Activated naive CD4-positive, alpha-beta T cell treated with anti-CD3 and anti-CD28 coated beads for 36 hours (primary cell): ENCODE measurements at regions of chr2 and their contacts with region 1.

Region 1: DNA sequence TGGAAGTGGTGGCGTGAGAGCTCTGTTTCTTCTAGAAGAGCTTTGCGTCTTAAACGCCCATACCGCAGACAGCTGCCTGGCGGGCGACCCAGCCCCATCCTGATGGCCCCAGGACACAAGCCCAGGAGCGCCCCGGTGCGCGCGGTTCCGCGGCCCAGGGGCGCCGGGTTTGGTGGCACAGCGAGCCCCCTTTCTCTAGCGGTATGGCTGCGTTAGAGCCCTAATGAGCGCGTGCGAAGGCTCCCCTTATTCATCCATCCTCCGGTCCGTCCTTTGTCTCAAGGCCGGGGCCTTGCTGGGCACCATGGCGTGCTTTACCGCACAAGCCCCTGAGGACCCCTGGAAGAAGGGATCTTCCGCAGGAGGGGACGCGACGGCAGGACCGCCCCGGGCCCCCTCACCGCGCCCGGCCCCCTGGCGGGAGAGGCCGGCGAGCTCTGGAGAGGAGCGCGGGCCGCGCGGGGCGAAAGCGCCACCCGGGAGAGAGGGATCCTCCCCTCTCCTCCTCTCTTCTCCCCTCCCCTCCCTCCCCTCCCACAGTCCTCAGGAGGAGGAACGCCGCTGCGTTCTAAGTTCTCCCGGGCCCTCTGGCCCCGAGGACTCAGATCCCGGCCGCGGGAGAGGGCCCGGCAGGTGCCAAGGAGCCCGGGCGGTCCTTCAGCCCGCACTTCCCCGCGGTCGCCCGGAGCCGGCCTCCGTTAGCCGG is 626 bp upstream of the SLC1A4 start:
- DNase-seq: peak; percentile 35
- H3K4me3 Mint-ChIP-seq: peak overlapping the region; percentile 60
- H3K27ac Mint-ChIP-seq: peak overlapping the region; percentile 7
- H3K4me1 Mint-ChIP-seq: peaks cover 35% of the 10 kb centered on the region
- H3K27me3 Mint-ChIP-seq: peaks cover 11% of the 10 kb centered on the region

Region 2: DNA sequence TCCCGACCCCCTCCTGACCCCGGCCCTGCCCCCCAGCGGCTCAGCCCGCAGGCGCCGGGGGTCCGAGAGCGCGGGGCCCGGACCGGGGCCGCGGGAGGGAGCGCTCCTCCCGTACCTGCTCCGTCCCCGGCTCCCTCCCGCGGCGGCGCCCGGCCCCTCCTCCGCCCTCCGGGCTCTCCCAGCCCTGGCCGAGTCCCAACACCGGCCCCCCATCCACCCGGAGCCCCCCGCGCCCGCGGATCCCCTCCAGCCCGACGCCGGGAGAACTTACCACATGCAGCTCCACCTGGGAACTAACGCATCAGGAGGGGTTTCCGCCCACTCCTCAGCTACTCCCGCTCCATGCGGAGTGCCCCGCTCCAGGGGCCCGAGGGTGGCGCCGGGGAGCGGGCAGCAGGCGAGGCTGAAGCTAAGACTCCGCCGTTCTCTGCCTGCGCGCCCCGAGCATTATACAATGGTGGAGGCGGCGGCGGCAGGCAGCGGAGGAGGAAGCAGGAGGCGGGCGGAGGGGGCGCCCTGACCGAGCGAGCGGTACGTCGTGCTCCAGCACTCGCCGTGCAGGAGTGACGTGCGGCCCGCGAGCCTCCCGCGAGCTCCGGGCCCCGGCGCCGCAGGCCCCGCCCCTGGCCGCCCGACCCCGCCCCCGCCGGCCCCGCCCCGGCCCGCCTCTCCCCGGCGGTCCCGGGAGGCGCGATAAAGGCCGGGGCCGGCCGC is 335.1 kb before region 1 on chr2 and contains the start of gene SERTAD2:
- CTCF ChIA-PET with region 1: no interaction called
- intact Hi-C with region 1: loop called (anchors 10 kb)
- DNase-seq: peak; percentile 85
- H3K4me3 Mint-ChIP-seq: peak within 1 kb of the TSS; percentile 79
- H3K27ac Mint-ChIP-seq: peak within 1 kb of the TSS; percentile 83
- H3K4me1 Mint-ChIP-seq: peaks cover 74% of the 10 kb centered on the region
- H3K27me3 Mint-ChIP-seq: no peaks in the 10 kb centered on the region
- total RNA-seq, gene SERTAD2: 11.4 to 11.6 TPM

Region 3: GRCh38 chr2:64914735-64915509 is 73.7 kb before region 1 on chr2:
- CTCF ChIA-PET with region 1: interaction called, 8 read pairs
- intact Hi-C with region 1: loop called (anchors 1 kb)
- DNase-seq: no peak
- H3K4me3 Mint-ChIP-seq: no peak overlapping the region
- H3K27ac Mint-ChIP-seq: no peak overlapping the region
- H3K4me1 Mint-ChIP-seq: peaks cover 14% of the 10 kb centered on the region
- H3K27me3 Mint-ChIP-seq: no peaks in the 10 kb centered on the region

Region 4: DNA sequence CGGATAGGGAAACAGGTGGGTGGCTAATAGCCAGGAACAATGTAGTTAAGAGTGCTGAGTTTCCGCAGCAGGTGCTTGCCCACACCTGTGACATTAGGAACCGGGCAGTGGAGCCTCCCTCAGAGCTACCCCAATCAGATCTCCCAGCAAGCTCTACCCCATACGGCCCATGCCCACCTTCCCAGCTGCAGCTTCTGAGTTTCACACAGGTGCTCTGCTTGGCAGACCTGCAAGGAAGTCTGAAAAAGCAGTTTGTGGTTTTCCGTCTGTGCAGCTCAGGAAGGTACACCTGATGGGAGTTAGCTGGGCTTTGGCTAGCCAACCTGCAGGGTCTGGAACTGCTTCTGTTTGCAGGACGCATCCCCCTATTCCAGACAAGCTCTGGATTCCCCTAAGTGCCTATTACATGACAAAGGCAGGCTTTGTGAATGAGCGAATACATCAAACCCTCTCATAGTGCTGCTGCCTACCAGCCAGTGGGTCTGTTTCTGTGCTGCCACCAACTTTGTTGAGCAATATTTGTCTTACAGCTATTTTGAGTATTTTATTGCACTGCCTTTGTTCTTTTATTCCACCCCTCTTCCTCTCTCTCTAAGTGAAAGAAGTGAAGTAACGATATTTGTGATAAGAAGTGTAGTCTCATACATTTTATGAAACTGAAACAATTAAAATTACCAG is 42.9 kb after region 1 on chr2:
- CTCF ChIA-PET with region 1: interaction called, 4 read pairs
- intact Hi-C with region 1: loop called (anchors 2 kb)
- DNase-seq: peak; percentile 18
- H3K4me3 Mint-ChIP-seq: no peak overlapping the region
- H3K27ac Mint-ChIP-seq: no peak overlapping the region
- H3K4me1 Mint-ChIP-seq: peaks cover 23% of the 10 kb centered on the region
- H3K27me3 Mint-ChIP-seq: no peaks in the 10 kb centered on the region

Region 5: DNA sequence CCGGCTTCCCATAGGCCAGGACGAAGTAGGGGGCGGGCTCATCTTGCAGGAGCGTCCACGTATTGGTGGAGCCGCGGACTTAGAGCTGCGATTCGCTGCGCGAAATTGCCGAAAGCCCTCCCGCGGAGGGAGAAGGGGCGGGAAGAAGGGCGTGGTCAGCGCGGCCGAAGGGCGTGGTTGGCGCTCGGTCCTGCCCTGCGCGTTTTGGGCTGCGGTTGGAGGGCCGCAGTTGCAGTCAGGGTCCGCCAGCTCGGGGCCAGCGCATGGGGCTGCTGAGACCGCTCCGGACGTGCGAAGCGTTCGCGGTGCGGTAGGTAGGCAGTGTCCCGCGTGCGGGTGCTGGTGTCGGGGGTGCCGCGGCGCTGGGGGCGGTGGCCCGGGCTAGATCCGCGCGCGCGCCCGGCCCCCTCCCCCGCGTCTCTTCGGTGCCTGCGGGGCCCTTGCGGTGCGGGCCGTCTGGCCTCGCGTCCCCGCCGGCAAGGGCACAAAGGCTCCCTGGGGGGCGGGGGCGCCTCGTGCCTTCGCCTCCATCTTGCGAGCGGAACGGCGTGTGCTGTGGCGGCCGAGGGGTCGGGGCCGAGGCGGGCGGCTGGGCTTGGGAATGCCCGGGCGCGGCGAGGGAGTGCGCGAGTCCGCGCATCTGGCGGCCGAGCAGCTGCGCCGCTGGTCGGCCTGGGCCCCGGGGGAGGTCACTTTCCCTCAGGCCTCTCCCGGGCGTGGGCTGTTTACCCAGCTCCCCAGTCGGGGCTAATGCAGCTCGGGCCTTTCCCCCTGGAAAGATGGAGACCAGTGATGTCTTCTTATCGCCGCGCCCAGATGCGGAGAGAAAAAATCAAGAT is 67.9 kb after region 1 on chr2 and contains the start of gene CEP68:
- CTCF ChIA-PET with region 1: no interaction called
- intact Hi-C with region 1: loop called (anchors 1 kb)
- DNase-seq: peak; percentile 98
- H3K4me3 Mint-ChIP-seq: peak within 1 kb of the TSS; percentile 93
- H3K27ac Mint-ChIP-seq: peak within 1 kb of the TSS; percentile 67
- H3K4me1 Mint-ChIP-seq: peaks cover 51% of the 10 kb centered on the region
- H3K27me3 Mint-ChIP-seq: no peaks in the 10 kb centered on the region
- total RNA-seq, gene CEP68: 6.0 to 7.3 TPM

Region 6: DNA sequence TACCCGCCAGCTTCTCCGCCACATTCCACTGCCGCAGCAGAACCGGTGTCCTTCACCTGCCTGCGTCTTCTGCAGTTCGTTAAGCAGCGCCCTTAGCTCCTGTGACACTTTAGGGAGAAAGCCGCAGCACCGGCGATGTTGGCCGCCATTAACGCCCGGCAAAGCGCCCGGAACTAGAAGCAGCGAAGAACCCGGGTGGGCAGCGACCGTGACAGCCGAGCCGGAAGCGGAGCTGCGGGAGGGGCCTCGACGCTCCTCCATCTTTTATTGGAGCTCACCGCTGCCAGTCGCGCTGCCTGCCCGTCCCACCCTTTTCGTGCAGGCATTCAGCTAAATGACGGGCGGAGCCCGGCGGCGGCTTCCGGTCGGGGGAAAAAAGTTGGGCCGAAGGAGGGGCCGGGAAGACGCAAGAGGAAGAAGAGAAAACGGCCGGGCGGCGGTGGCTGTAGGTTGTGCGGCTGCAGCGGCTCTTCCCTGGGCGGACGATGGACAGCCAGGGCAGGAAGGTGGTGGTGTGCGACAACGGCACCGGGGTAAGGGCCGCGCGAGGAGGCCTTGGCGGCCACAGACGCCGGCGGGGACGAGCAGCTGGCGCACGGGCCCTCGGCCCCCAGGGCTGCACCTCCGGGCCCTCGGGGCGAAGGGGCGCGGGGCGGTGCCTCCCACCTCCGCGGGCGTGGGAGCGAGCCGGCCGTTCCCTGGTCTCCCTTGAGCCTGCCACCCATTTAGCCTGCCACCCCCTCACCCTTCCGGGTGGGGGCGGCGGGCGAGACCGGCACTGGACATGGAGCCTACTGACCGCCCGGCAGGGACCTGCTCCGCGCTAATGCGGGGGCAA is 239.1 kb after region 1 on chr2 and contains the start of gene ACTR2:
- CTCF ChIA-PET with region 1: interaction called, 3 read pairs
- intact Hi-C with region 1: loop called (anchors 1 kb)
- DNase-seq: peak; percentile 96
- H3K4me3 Mint-ChIP-seq: peak within 1 kb of the TSS; percentile 98
- H3K27ac Mint-ChIP-seq: peak within 1 kb of the TSS; percentile 99
- H3K4me1 Mint-ChIP-seq: peaks cover 41% of the 10 kb centered on the region
- H3K27me3 Mint-ChIP-seq: no peaks in the 10 kb centered on the region
- total RNA-seq, gene ACTR2: 358 to 366 TPM

Region 7: GRCh38 chr2:65345631-65346030 is 357.1 kb after region 1 on chr2:
- CTCF ChIA-PET with region 1: no interaction called
- intact Hi-C with region 1: no loop called
- DNase-seq: no peak
- H3K4me3 Mint-ChIP-seq: no peak overlapping the region
- H3K27ac Mint-ChIP-seq: no peak overlapping the region
- H3K4me1 Mint-ChIP-seq: peaks cover 3% of the 10 kb centered on the region
- H3K27me3 Mint-ChIP-seq: no peaks in the 10 kb centered on the region

Region 8: GRCh38 chr2:65432227-65433190 is 443.9 kb after region 1 on chr2 and contains the start of gene SPRED2:
- CTCF ChIA-PET with region 1: no interaction called
- intact Hi-C with region 1: loop called (anchors 1 kb)
- DNase-seq: peak; percentile 89
- H3K4me3 Mint-ChIP-seq: peak within 1 kb of the TSS; percentile 91
- H3K27ac Mint-ChIP-seq: peak within 1 kb of the TSS; percentile 75
- H3K4me1 Mint-ChIP-seq: peaks cover 11% of the 10 kb centered on the region
- H3K27me3 Mint-ChIP-seq: peaks cover 26% of the 10 kb centered on the region
- total RNA-seq, gene SPRED2: 8.0 to 11.4 TPM

Region 9: GRCh38 chr2:65456064-65456463 is 467.5 kb after region 1 on chr2:
- CTCF ChIA-PET with region 1: no interaction called
- intact Hi-C with region 1: no loop called
- DNase-seq: no peak
- H3K4me3 Mint-ChIP-seq: no peak overlapping the region
- H3K27ac Mint-ChIP-seq: no peak overlapping the region
- H3K4me1 Mint-ChIP-seq: no peaks in the 10 kb centered on the region
- H3K27me3 Mint-ChIP-seq: peaks cover 22% of the 10 kb centered on the region